Right ventricle myocardium superior (tissue), 1 donor: ENCODE measurements at regions of chr5 and their contacts with region 1.

Region 1: GRCh38 chr5:102583276-102584124 is 84.7 kb upstream of the SLCO6A1 start:
- DNase-seq: no peak
- ATAC-seq: peak; percentile 62

Region 2: GRCh38 chr5:101969742-101970141 is 613.8 kb before region 1 on chr5:
- intact Hi-C with region 1: no loop called
- DNase-seq: no peak
- ATAC-seq: no peak

Region 3: DNA sequence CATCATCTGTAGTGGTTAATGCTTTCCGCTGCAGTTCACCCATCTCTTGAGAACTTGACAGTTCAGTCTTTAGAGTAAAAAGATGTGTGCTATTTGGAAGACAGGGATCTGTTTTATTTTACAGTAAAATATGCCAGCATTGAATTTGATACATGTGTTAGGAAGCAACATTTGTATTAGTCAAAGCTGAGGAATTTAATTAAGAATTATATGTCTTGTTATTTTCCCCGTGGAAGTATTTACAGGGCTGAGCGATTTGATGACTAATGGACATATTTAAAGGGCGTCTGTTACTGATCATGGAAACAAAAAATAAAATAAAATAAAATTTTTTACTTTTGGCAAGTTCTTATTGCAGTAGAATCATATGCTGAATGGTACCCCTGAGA is 272.9 kb after region 1 on chr5:
- intact Hi-C with region 1: no loop called
- DNase-seq: no peak
- ATAC-seq: no peak

Region 4: DNA sequence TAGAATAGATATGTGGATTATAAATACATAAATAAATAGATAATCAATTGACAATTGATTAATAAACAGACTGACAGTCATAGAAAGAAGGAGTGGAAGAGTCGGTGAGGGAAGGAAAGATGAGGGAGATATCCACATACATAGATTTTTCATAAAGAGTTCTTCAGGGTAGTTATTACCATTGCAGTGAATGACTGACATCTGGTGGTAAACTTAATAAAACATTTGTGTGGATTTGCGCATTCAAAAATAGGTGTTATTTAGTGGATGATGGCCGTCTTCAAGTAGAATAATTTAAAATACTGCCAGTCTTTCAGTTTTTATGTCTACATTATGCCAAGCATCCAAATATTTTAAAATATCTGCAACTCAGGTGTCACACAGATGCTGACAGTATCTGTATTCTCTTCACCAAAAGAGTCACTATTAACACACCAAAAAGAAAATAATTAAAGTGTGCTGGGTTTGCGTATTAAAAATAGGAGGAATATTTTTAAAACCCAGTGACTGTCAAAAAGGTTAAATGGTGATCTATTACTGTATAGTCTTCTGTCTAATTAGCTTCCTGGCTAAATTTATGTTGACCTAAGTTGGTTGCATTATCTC is 457.7 kb after region 1 on chr5:
- intact Hi-C with region 1: loop called (anchors 5 kb)
- DNase-seq: no peak
- ATAC-seq: peak; percentile 62